ENCODE measurements at regions of chr2 and their contacts with region 1.

Region 1: DNA sequence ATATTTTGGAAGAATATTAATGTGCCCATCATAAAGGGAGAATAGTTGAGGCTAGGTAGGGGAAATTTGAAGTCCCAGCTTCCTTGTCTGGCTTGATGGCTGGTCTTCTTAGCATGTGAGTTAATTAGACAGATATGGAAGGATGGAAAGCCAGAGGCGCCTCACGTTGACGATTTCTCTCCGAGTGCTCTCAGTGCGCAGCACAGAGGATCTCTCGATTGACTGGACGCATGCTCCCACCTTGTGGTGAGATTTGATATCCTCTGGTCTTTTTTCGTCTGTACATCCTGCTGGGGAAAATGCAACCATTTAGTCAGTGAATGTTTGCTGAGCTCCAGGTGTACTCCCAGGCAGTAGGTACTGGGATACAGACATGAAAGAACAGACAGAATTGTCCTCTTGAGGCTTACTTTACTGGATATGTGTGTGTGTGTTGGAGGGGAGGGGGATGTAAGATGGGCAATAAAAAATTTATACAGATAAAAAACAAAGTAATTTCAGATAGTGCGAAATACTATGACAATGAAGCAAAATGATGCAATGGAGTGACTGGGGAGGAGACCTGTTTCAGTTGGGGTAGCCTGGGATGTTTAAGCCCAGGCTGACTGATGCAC is 66.9 kb upstream of the ZNG1B start:
- DNase-seq: peak; percentile 41 to 73 (median 46)
- ATAC-seq: peak; percentile 95
- H3K4me3 ChIP-seq: no peak overlapping the region
- H3K27ac ChIP-seq: no peak overlapping the region
- H3K4me1 ChIP-seq: no peaks in the 10 kb centered on the region
- H3K27me3 ChIP-seq: no peaks in the 10 kb centered on the region; a peak in 1 of 5 replicates
- CTCF ChIP-seq: peak; percentile 70 to 80 (median 73)
- EP300 ChIP-seq: no peak
- POLR2A ChIP-seq: no peak
- RAD21 ChIP-seq: peak; percentile 85 to 90

Region 2: GRCh38 chr2:113080134-113080533 is 290.5 kb before region 1 on chr2:
- CTCF ChIA-PET with region 1: interaction called, 6 read pairs
- POLR2A ChIA-PET with region 1: no interaction called
- in situ Hi-C with region 1: no loop called
- intact Hi-C with region 1: loop called (anchors 1 kb)
- DNase-seq: peak; percentile 60 to 64 (median 62)
- ATAC-seq: peak; percentile 97
- H3K4me3 ChIP-seq: no peak overlapping the region
- H3K27ac ChIP-seq: no peak overlapping the region
- H3K4me1 ChIP-seq: no peaks in the 10 kb centered on the region
- H3K27me3 ChIP-seq: peaks cover 2 to 14% of the 10 kb centered on the region in 2 experiments; a peak in 4 of 5 replicates
- CTCF ChIP-seq: peak; percentile 93 to 96 (median 96)
- EP300 ChIP-seq: no peak
- POLR2A ChIP-seq: no peak
- RAD21 ChIP-seq: peak; percentile 88 to 90

Region 3: GRCh38 chr2:113203901-113204519 is 166.6 kb before region 1 on chr2:
- CTCF ChIA-PET with region 1: interaction called, 8 read pairs
- POLR2A ChIA-PET with region 1: no interaction called
- in situ Hi-C with region 1: loop called (anchors 5 kb)
- intact Hi-C with region 1: loop called (anchors 1 kb)
- DNase-seq: peak; percentile 80 to 82 (median 80)
- ATAC-seq: peak; percentile 97
- H3K4me3 ChIP-seq: no peak overlapping the region
- H3K27ac ChIP-seq: no peak overlapping the region
- H3K4me1 ChIP-seq: no peaks in the 10 kb centered on the region
- H3K27me3 ChIP-seq: peaks cover 2 to 13% of the 10 kb centered on the region in 2 experiments; a peak in 3 of 5 replicates
- CTCF ChIP-seq: peak; percentile 88 to 95 (median 92)
- EP300 ChIP-seq: no peak
- POLR2A ChIP-seq: no peak
- RAD21 ChIP-seq: peak; percentile 83 to 88

Region 4: GRCh38 chr2:113209011-113209641 is 161.5 kb before region 1 on chr2:
- CTCF ChIA-PET with region 1: interaction called, 8 read pairs
- POLR2A ChIA-PET with region 1: no interaction called
- in situ Hi-C with region 1: loop called (anchors 5 kb)
- intact Hi-C with region 1: loop called (anchors 1 kb)
- DNase-seq: no peak
- ATAC-seq: no peak
- H3K4me3 ChIP-seq: no peak overlapping the region
- H3K27ac ChIP-seq: no peak overlapping the region
- H3K4me1 ChIP-seq: peaks cover 3 to 4% of the 10 kb centered on the region in 2 experiments; a peak in 4 of 5 replicates
- H3K27me3 ChIP-seq: peaks cover 2 to 13% of the 10 kb centered on the region in 2 experiments; a peak in 3 of 5 replicates
- CTCF ChIP-seq: no peak
- EP300 ChIP-seq: no peak
- POLR2A ChIP-seq: no peak
- RAD21 ChIP-seq: no peak

Region 5: DNA sequence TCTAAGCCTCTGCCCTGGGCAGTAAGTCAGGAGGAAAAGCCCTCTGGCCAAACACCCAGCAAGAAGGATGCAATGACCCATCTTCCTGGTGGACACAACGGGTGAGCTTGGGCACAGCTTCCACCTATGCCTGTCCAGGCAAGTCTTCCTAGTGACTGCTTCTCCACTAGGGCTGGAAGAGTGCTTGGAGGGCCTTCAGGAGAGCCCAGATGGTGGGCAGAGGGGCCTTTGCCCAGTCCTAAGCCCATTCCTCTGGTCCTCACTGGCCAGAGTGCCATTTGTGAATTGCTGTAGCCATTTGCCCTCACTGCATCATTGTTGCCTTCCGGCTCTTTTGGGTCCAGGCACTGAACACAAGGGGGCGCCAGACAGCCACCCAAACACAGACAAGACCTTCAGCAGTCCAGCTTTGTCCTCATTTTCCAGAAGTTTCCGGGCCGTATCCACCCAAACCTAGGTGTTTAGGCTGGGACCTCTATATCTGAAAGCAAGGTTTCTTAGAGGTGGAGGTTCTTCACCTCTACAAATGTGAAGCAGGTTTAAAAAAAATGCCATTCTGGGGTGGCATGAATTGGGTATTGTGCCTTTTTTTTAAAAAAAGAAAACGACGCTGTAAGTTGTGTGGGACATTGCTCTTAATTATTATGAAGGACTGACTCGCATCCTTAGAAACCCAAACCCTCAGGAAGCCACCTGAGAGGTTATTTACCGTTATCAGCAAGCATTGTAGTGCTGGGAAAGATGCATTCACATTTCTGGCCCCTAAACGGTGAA is 121.4 kb before region 1 on chr2:
- CTCF ChIA-PET with region 1: interaction called, 12 read pairs
- POLR2A ChIA-PET with region 1: no interaction called
- in situ Hi-C with region 1: no loop called
- intact Hi-C with region 1: loop called (anchors 1 kb)
- DNase-seq: peak; percentile 78 to 85 (median 82)
- ATAC-seq: peak; percentile 94
- H3K4me3 ChIP-seq: no peak overlapping the region
- H3K27ac ChIP-seq: no peak overlapping the region
- H3K4me1 ChIP-seq: peaks cover 0 to 20% of the 10 kb centered on the region in 2 experiments; a peak in 4 of 5 replicates
- H3K27me3 ChIP-seq: no peaks in the 10 kb centered on the region
- CTCF ChIP-seq: peak; percentile 87 to 91 (median 88)
- EP300 ChIP-seq: no peak
- POLR2A ChIP-seq: no peak
- RAD21 ChIP-seq: peak; percentile 56 to 83

Region 6: GRCh38 chr2:113390124-113390849 is 19.7 kb after region 1 on chr2:
- CTCF ChIA-PET with region 1: no interaction called
- POLR2A ChIA-PET with region 1: no interaction called
- in situ Hi-C with region 1: no loop called
- intact Hi-C with region 1: no loop called
- DNase-seq: peak; percentile 51 to 71 (median 57)
- ATAC-seq: peak; percentile 90
- H3K4me3 ChIP-seq: no peak overlapping the region
- H3K27ac ChIP-seq: no peak overlapping the region
- H3K4me1 ChIP-seq: no peaks in the 10 kb centered on the region
- H3K27me3 ChIP-seq: no peaks in the 10 kb centered on the region; a peak in 1 of 5 replicates
- CTCF ChIP-seq: peak; percentile 91 to 95 (median 93)
- EP300 ChIP-seq: no peak
- POLR2A ChIP-seq: no peak
- RAD21 ChIP-seq: peak; percentile 23 to 27; a peak in 1 of 4 replicates

Region 7: GRCh38 chr2:113734185-113734584 is 363.6 kb after region 1 on chr2:
- CTCF ChIA-PET with region 1: no interaction called
- POLR2A ChIA-PET with region 1: no interaction called
- in situ Hi-C with region 1: no loop called
- intact Hi-C with region 1: no loop called
- DNase-seq: no peak
- ATAC-seq: no peak
- H3K4me3 ChIP-seq: no peak overlapping the region
- H3K27ac ChIP-seq: no peak overlapping the region
- H3K4me1 ChIP-seq: no peaks in the 10 kb centered on the region
- H3K27me3 ChIP-seq: no peaks in the 10 kb centered on the region
- CTCF ChIP-seq: no peak
- EP300 ChIP-seq: no peak
- POLR2A ChIP-seq: no peak
- RAD21 ChIP-seq: no peak

Region 8: GRCh38 chr2:113784823-113785744 is 414.5 kb after region 1 on chr2:
- CTCF ChIA-PET with region 1: no interaction called
- POLR2A ChIA-PET with region 1: no interaction called
- in situ Hi-C with region 1: no loop called
- intact Hi-C with region 1: no loop called
- DNase-seq: no peak
- ATAC-seq: no peak
- H3K4me3 ChIP-seq: no peak overlapping the region
- H3K27ac ChIP-seq: no peak overlapping the region
- H3K4me1 ChIP-seq: no peaks in the 10 kb centered on the region
- H3K27me3 ChIP-seq: no peaks in the 10 kb centered on the region; a peak in 2 of 5 replicates
- CTCF ChIP-seq: no peak
- EP300 ChIP-seq: no peak
- POLR2A ChIP-seq: no peak
- RAD21 ChIP-seq: no peak